Activated T-helper 2 cell treated with anti-CD3 and anti-CD28 coated beads, Interferon-gamma antibody, Interleukin-2, Interleukin-4, amounts not matched to agents 10 μg/mL and 5 μg/mL and 100 μg/mL, durations not matched to agents 14 hours and 24 hours and 36 hours (primary cell): ENCODE measurements at regions of chr20 and their contacts with region 1.

Region 1: DNA sequence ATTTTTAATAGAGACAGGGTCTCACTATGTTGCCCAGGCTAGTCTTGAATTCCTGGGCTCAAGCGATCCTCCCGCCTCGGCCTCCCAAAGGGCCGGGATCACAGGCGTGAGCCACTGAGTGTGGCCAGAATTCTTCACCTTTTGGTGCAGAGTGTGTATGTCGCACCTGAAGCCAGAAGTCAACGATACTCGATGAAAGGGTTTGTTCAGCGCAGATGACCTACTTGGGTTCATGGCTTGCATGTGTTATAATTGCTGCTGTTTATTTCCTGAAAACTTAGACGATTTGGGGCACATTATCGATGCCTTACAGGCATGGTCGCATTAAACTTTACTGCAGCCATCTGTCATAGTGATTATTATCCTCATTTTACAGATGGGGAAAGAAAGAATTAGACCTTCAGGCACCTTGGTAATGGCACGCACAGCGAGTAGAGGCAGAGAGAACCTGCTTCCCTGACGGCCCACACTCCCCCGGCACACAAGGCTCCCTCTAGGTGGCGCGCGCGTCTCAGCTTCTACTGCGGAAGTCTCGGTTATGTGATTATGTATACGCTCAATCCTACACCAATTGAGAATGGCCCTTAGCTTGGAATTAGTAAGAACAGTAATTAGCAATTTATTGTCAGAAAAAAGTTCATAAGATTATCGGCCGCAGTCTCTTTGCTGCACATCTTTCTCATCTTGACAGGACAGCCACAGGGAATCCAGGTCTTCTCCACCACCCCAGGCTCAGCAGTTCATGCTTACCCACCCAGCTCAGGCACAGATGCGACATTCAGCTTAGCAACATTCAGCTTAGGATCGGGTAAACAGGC is 212.8 kb upstream of the PROKR2 start:
- DNase-seq: peak; percentile 80
- H3K4me3 Mint-ChIP-seq: peak overlapping the region; percentile 24
- H3K27ac Mint-ChIP-seq: peak overlapping the region; percentile 69
- H3K4me1 Mint-ChIP-seq: peaks cover 18% of the 10 kb centered on the region
- H3K27me3 Mint-ChIP-seq: no peaks in the 10 kb centered on the region

Region 2: GRCh38 chr20:5788385-5788895 is 258.9 kb after region 1 on chr20:
- intact Hi-C with region 1: loop called (anchors 1 kb)
- DNase-seq: peak; percentile 62
- H3K4me3 Mint-ChIP-seq: no peak overlapping the region
- H3K27ac Mint-ChIP-seq: no peak overlapping the region
- H3K4me1 Mint-ChIP-seq: peaks cover 3% of the 10 kb centered on the region
- H3K27me3 Mint-ChIP-seq: no peaks in the 10 kb centered on the region

Region 3: GRCh38 chr20:5918856-5919625 is 389.5 kb after region 1 on chr20:
- intact Hi-C with region 1: loop called (anchors 5 kb)
- DNase-seq: no peak
- H3K4me3 Mint-ChIP-seq: no peak overlapping the region
- H3K27ac Mint-ChIP-seq: peak overlapping the region; percentile 68
- H3K4me1 Mint-ChIP-seq: peaks cover 20% of the 10 kb centered on the region
- H3K27me3 Mint-ChIP-seq: peaks cover 19% of the 10 kb centered on the region

Region 4: DNA sequence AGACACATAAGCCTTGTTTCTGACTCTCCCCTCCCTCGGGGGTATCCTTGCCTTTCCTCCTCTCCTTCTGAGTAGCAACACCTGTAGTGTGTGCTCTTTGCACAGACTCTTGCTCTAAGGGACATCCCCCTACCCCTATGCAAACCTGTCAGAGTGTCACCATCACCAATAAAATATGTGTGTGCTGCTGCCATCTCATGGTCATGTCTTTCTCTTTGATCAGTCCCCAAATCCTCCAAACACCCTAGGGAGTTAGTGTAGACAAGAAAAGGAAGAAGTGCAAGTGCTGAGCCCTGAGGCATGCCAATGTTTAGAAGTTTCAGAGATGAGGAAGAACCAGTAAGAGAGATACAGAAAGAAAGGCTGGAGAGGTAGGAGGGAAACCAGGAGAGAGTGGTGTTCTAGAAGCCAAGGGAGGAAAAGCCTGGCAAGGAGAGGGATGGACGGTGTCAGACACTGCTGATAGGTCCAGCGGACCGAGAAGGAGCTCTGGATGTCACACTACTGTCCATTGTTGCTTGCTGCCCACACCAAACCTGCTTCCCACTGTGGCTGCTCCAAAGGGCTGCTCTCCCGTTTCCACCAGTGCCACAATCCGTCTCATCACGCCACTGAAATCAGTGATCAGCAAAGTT is 404.4 kb after region 1 on chr20:
- intact Hi-C with region 1: loop called (anchors 5 kb)
- DNase-seq: no peak
- H3K4me3 Mint-ChIP-seq: no peak overlapping the region
- H3K27ac Mint-ChIP-seq: no peak overlapping the region
- H3K4me1 Mint-ChIP-seq: peaks cover 9% of the 10 kb centered on the region
- H3K27me3 Mint-ChIP-seq: peaks cover 7% of the 10 kb centered on the region

Region 5: DNA sequence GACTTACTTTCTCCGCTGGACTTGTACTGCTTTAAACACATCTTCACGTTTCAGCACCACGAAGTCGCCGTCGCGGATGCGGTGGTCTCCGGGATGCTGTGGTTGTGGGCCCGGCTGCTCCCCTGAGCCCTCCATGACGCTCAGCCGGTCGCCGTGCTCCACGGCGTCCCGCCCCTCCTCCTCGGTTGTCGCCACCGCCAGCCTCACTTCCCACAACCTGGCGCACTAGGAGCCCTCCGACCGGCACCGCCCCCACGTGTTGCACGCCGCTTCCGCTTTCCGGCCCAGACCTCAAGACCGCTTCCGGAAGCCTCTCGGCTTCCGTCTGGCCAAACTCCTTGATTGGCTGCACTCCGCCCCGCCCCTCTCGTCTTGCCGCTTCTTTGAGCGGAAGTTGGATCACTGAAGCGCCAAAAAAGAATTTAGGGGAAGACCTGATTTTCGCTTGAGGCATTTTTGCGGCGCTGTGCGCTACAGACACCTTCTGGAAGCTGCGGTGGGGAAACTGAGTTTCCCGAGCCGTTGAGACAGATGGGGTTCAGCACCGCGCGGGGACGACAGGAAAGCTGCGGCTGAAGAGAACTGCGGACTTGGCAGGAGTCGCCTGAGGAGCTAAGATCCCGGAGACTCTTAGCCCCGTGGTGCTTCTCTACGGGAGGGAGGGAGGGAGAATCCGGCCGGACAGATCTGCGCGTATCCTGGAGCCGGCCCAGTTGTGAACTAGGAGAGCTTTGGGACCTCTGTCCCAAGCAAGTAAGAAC is 420.9 kb after region 1 on chr20 and contains the starts of genes MCM8 and TRMT6:
- intact Hi-C with region 1: loop called (anchors 1 kb)
- DNase-seq: peak; percentile 95
- H3K4me3 Mint-ChIP-seq: peak within 1 kb of the TSS; percentile 95
- H3K27ac Mint-ChIP-seq: peak within 1 kb of the TSS; percentile 94
- H3K4me1 Mint-ChIP-seq: peaks cover 53% of the 10 kb centered on the region
- H3K27me3 Mint-ChIP-seq: no peaks in the 10 kb centered on the region
- total RNA-seq, gene MCM8: 33.5 and 35.2 TPM in 2 replicates
- total RNA-seq, gene TRMT6: 25.5 and 27.5 TPM in 2 replicates

Region 6: GRCh38 chr20:6074145-6074561 is 544.6 kb after region 1 on chr20:
- intact Hi-C with region 1: loop called (anchors 1 kb)
- DNase-seq: no peak
- H3K4me3 Mint-ChIP-seq: no peak overlapping the region
- H3K27ac Mint-ChIP-seq: no peak overlapping the region
- H3K4me1 Mint-ChIP-seq: no peaks in the 10 kb centered on the region
- H3K27me3 Mint-ChIP-seq: peaks cover 4% of the 10 kb centered on the region